K562 (cell line): ENCODE measurements at regions of chr12 and their contacts with region 1.

Region 1: DNA sequence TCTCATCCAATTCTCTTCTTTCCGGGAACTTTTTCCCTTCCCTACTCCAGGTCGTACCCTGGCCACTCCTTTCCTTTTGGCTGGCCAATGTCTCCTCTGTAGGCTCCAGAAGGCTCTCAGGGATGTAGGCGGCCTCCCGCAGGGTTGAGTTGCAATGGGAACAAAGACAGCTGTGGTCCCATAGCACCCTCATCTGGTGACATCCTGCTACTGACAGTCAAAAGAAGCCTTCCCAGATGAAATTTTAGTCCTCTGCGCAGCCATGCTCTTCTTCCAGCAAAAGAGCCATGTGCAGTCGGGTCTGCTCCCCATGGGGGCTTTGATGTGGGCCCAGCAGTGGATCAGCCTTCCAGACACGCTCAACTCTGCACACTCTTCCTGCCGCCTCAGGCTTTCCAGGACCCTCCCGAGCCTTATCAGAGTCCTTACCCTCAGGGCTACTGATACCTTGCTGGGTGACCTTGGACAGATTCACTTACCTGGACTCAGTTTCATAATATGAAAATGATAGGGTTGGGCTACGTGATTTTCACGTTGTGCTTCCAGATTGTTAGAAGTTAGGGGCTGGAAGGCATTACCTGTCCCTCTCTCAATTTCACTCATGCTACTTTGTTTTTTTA is 5.5 kb upstream of the CELA1 start:
- DNase-seq: peak; percentile 64 to 82 (median 68)
- ATAC-seq: peak; percentile 90
- H3K4me3 ChIP-seq: no peak overlapping the region
- H3K27ac ChIP-seq: no peak overlapping the region
- H3K4me1 ChIP-seq: peaks cover 2 to 5% of the 10 kb centered on the region in 2 experiments; a peak in 3 of 5 replicates
- H3K27me3 ChIP-seq: no peaks in the 10 kb centered on the region
- CTCF ChIP-seq: peak; percentile 89 to 93 (median 93)
- EP300 ChIP-seq: no peak
- POLR2A ChIP-seq: no peak
- RAD21 ChIP-seq: peak; percentile 80 to 89

Region 2: DNA sequence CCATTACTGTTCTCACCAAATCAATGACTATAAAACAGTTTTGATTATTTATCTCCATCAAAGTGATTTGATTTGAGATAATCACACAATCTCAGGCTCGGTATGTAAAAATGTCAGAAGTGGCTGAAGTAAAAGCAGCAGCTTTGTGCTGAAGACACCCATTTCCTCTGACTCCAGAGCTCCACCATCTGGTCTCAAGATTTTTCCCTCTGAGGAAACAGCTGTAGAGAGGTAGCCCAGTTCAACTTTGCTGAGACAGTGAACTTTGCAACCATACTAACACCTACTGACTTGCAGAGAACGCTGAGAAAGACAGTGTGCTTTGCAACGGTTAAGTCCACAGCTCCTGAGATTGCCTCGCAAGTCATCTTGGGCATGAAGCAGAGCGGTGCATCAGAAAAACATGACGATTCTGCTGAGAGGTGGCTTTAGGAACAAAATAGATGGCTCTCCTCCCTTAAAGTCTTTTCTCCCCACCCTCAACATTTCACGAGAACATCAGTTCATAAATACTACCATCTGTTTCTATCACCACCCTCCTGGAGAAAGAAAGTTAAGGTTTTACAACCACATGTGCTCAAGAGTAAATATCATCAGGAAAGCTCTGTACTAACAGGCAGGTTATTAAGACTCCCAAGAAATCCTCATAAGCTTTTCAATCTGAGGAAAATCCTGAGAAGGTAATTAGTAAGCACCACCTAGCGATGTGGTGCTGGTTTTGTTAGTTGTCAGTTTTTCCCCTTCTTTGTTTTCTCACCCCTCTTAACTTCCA is 364.9 kb before region 1 on chr12:
- CTCF ChIA-PET with region 1: no interaction called
- POLR2A ChIA-PET with region 1: interaction called, 6 read pairs
- in situ Hi-C with region 1: no loop called
- intact Hi-C with region 1: loop called (anchors 5 kb)
- DNase-seq: peak; percentile 27 to 56 (median 40)
- ATAC-seq: peak; percentile 90
- H3K4me3 ChIP-seq: no peak overlapping the region
- H3K27ac ChIP-seq: no peak overlapping the region
- H3K4me1 ChIP-seq: no peaks in the 10 kb centered on the region
- H3K27me3 ChIP-seq: no peaks in the 10 kb centered on the region
- CTCF ChIP-seq: peak; percentile 58 to 72 (median 62)
- EP300 ChIP-seq: no peak
- POLR2A ChIP-seq: no peak
- RAD21 ChIP-seq: peak; percentile 86 to 88

Region 3: GRCh38 chr12:51047655-51048540 is 304.1 kb before region 1 on chr12 and contains the start of gene LETMD1:
- CTCF ChIA-PET with region 1: no interaction called
- POLR2A ChIA-PET with region 1: no interaction called
- in situ Hi-C with region 1: no loop called
- intact Hi-C with region 1: loop called (anchors 5 kb)
- DNase-seq: peak; percentile 85 to 98 (median 90)
- ATAC-seq: peak; percentile 98
- H3K4me3 ChIP-seq: peak within 1 kb of the TSS; percentile 59
- H3K27ac ChIP-seq: peak within 1 kb of the TSS; percentile 96
- H3K4me1 ChIP-seq: peaks cover 4 to 10% of the 10 kb centered on the region in 2 experiments; a peak in 4 of 5 replicates
- H3K27me3 ChIP-seq: no peaks in the 10 kb centered on the region
- CTCF ChIP-seq: peak; percentile 90 to 95 (median 93)
- EP300 ChIP-seq: no peak
- POLR2A ChIP-seq: peak; percentile 96
- RAD21 ChIP-seq: peak; percentile 81 to 84
- polyA plus RNA-seq, gene LETMD1: 58.7 to 75.4 TPM

Region 4: DNA sequence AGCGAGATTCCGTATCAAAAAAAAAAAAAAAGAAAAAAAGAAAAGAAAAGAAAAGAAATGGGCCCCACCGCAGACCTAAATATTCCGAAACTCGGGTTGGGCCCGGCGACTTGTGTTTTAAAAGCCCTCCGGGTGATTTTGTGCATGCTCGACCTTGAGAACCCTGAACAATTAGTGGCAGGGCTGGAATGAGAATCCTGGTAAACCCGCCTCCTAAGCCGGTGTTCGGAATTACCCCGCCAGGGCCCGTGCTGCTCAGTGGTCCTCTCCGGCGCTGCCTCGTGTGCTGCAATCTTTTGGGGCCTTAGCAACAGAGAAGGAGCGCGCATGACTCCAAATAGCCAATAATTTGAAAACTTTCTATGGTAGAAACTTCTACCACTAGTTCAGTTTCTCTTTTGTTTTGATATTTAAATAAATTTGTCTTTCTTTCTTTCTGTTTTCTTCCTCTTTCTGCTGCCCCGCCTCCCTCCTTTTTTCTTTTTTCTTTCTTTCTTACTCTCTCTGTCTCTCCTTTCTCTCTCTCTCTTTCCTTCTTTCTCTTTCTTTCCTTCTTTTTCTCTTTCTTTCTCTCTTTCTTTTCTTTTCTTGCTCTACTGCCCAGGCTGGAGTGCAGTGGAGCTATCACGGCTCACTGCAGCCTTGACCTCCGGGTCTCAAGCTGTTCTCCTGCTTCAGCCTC is 40.7 kb after region 1 on chr12:
- CTCF ChIA-PET with region 1: no interaction called
- POLR2A ChIA-PET with region 1: no interaction called
- in situ Hi-C with region 1: no loop called
- intact Hi-C with region 1: no loop called
- DNase-seq: peak in 1 of 4 experiments; percentile 5
- ATAC-seq: no peak
- H3K4me3 ChIP-seq: no peak overlapping the region
- H3K27ac ChIP-seq: no peak overlapping the region
- H3K4me1 ChIP-seq: peaks cover 41 to 50% of the 10 kb centered on the region in 2 experiments
- H3K27me3 ChIP-seq: no peaks in the 10 kb centered on the region
- CTCF ChIP-seq: no peak
- EP300 ChIP-seq: no peak
- POLR2A ChIP-seq: no peak
- RAD21 ChIP-seq: no peak